PC-3 (cell line): ENCODE measurements at regions of chr2 and their contacts with region 1.

Region 1: DNA sequence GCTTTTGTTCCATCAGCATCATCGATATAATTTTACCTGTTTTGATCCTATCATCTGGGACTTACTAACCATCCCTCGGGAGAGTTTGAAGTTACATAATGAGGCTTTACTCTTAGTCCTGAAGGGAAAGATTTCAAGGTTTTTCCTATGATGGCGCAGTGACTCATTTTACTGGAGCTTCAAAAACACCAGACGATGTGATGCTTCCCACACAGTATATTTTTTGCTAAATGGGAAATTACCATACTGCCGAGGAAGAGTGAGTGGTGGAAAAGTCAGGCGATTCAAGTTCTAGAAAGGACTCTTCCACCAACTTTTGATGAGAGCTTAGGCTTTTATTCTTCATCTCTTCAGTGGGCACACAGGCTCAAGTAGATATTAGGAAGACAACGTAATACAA is 44.6 kb upstream of the GCG start:
- DNase-seq: peak; percentile 85
- ATAC-seq: peak; percentile 78
- H3K4me3 ChIP-seq: peak overlapping the region; percentile 20; the same call in 1 of the 2 replicates
- H3K27ac ChIP-seq: peak overlapping the region; percentile 67
- H3K4me1 ChIP-seq: peaks cover 40% of the 10 kb centered on the region
- H3K27me3 ChIP-seq: no peaks in the 10 kb centered on the region
- CTCF ChIP-seq: no peak

Region 2: GRCh38 chr2:162058973-162059668 is 137.5 kb before region 1 on chr2:
- CTCF ChIA-PET with region 1: no interaction called
- POLR2A ChIA-PET with region 1: no interaction called
- intact Hi-C with region 1: no loop called
- DNase-seq: no peak
- ATAC-seq: no peak
- H3K4me3 ChIP-seq: no peak overlapping the region
- H3K27ac ChIP-seq: no peak overlapping the region
- H3K4me1 ChIP-seq: no peaks in the 10 kb centered on the region
- H3K27me3 ChIP-seq: no peaks in the 10 kb centered on the region
- CTCF ChIP-seq: no peak

Region 3: DNA sequence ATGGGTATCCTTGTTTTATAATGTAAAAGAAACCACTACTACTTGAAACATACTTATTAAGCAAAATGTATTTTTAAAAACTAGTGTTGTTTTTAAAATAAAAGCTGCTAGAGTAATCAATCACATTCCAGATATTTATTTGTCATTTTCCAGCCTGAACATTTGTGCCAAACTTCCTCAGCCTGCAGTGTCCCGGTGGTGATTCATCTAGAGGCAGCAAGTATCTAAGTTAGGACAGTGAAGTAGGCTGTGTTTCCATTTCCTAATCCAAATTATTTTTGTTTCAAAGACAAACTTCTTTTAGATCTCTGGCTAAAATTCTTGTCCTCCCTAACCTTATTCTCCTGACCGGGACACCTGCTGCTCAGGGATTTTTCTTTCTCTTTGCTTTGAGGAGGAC is 31.8 kb before region 1 on chr2:
- CTCF ChIA-PET with region 1: no interaction called
- POLR2A ChIA-PET with region 1: no interaction called
- intact Hi-C with region 1: loop called (anchors 1 kb)
- DNase-seq: no peak
- ATAC-seq: 0 out of 2 replicates have a peak, but pooled peaks have one; percentile 31
- H3K4me3 ChIP-seq: no peak overlapping the region
- H3K27ac ChIP-seq: no peak overlapping the region
- H3K4me1 ChIP-seq: peaks cover 23% of the 10 kb centered on the region
- H3K27me3 ChIP-seq: no peaks in the 10 kb centered on the region
- CTCF ChIP-seq: no peak

Region 4: GRCh38 chr2:162282765-162283425 is 86.3 kb after region 1 on chr2:
- CTCF ChIA-PET with region 1: no interaction called
- POLR2A ChIA-PET with region 1: no interaction called
- intact Hi-C with region 1: no loop called
- DNase-seq: no peak
- ATAC-seq: no peak
- H3K4me3 ChIP-seq: no peak overlapping the region
- H3K27ac ChIP-seq: no peak overlapping the region
- H3K4me1 ChIP-seq: peaks cover 6% of the 10 kb centered on the region; the same call in 1 of the 2 replicates
- H3K27me3 ChIP-seq: no peaks in the 10 kb centered on the region
- CTCF ChIP-seq: no peak